ENCODE measurements at regions of chr12 and their contacts with region 1.

Region 1: GRCh38 chr12:49580572-49581535 is 12.9 kb upstream of the MCRS1 start:
- DNase-seq: peak; percentile 9
- H3K4me3 ChIP-seq: no peak overlapping the region
- CTCF ChIP-seq: peak; percentile 93

Region 2: DNA sequence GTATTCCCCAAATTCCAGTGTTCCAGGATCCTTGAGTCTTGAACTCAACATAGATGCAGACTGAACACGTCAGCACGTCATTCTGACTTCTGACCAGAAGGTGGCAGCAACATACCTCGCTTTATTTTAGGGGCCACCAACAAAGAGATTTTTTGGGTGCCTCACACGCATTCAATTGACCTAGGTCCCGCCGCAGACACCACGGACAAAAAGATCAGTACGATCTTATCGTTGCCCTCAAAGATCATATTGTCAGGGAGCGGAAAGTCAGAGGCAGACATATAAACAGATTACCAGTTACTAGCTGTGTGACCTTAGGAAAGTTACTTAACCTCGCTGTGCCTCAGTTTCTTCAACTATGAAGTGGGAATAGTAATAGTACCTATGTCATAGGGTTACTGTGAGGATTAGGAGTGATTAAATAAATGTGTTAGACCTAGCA is 292.4 kb before region 1 on chr12:
- CTCF ChIA-PET with region 1: interaction called, 33 read pairs
- POLR2A ChIA-PET with region 1: no interaction called
- DNase-seq: no peak
- H3K4me3 ChIP-seq: no peak overlapping the region
- CTCF ChIP-seq: peak; percentile 68

Region 3: DNA sequence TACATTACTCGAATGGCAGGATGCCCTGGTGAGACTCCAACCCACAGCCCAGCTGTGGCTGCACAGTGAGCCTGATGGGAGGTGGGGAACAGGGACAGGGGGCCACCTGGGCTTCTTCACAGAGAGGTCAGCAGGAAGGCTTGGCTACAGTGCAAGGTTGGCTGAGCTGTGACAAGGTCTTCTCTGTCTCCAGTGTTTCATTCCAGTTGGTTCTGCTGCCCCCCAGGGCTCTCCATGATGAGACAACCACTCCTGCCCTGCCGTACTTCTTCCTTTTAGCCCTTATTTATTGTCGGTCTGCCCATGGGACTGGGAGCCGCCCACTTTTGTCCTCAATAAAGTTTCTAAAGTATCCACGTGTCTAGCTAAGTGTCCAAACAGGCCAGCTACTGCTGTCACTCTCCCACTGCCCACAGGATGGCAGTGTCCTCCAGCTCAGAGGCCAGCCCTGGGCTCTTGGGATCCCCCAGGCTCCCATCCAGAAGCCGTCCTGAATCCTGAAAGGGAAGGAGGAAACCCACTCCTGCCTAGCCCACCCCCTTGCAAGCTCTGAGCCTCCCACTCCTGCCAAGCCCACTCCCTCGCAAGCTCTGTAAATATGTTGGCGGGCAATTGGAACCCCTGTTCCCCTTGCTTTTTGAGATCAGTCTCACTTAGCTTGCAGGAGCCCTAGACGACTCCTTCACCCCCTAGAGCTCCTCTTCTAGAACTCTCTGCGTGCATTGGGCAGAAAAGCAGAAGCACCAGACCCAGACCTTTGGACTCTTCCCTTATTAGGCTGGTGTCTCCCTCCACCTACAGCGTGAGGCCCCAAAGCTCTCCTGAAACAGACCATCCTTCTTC is 249.3 kb before region 1 on chr12:
- CTCF ChIA-PET with region 1: interaction called, 161 read pairs
- POLR2A ChIA-PET with region 1: interaction called, 5 read pairs
- DNase-seq: no peak
- H3K4me3 ChIP-seq: no peak overlapping the region
- CTCF ChIP-seq: peak; percentile 84

Region 4: GRCh38 chr12:49515266-49515665 is 65.6 kb before region 1 on chr12:
- CTCF ChIA-PET with region 1: interaction called, 12 read pairs
- POLR2A ChIA-PET with region 1: no interaction called
- DNase-seq: no peak
- H3K4me3 ChIP-seq: no peak overlapping the region
- CTCF ChIP-seq: no peak

Region 5: GRCh38 chr12:49599961-49600360 is 19.1 kb after region 1 on chr12:
- CTCF ChIA-PET with region 1: interaction called, 23 read pairs
- POLR2A ChIA-PET with region 1: no interaction called
- DNase-seq: no peak
- H3K4me3 ChIP-seq: no peak overlapping the region
- CTCF ChIP-seq: no peak

Region 6: DNA sequence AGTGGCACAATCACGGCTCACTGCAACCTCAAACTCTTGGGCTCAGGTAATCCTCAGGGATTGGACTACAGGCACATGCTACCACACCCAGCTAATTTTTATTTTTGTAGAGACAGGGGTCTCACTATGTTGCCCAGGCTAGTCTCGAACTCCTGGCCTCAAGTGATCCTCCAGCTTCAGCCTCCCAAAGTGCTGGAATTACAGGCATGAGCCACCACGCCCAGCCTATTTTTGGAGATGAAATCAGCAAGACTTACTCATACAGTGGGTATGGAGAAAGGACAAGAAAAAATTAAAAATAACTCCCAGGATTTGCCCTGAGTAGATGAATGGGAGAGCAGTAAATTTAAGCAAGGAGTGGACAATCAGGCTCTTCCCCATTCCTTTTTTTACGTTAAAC is 113.1 kb after region 1 on chr12:
- CTCF ChIA-PET with region 1: no interaction called
- POLR2A ChIA-PET with region 1: no interaction called
- DNase-seq: no peak
- H3K4me3 ChIP-seq: no peak overlapping the region
- CTCF ChIP-seq: no peak

Region 7: GRCh38 chr12:49707128-49707811 is 126.4 kb after region 1 on chr12 and contains the start of gene FMNL3:
- CTCF ChIA-PET with region 1: interaction called, 10 read pairs
- POLR2A ChIA-PET with region 1: no interaction called
- DNase-seq: peak; percentile 59
- H3K4me3 ChIP-seq: peak within 1 kb of the TSS; percentile 70
- CTCF ChIP-seq: peak; percentile 90

Measured in AG04449 (cell line).